Activated CD4-positive, alpha-beta T cell treated with anti-CD3 and anti-CD28 coated beads for 36 hours (primary cell): ENCODE measurements at regions of chr14 and their contacts with region 1.

Region 1: DNA sequence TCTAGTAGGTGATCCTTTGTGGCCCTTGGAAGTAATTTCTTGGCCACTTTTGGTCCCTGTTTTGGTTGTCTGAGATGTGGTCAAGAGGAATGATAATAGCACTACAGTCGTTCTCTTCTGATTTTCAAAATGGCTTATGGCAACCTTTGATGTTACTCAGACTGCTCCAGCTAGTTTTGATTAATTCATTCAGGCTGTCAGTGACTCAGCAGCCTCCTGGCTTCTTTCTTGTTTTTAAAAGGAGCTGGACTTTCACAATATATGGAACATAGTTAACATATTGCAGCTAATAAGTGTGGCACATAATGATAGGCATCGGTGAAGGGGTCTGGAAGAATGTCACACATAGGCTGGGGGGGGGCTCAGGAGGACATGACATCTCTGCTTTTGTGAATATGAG is 47.4 kb downstream of the WDR20 start:
- DNase-seq: no peak
- ATAC-seq: no peak
- H3K4me3 Mint-ChIP-seq: no peak overlapping the region
- H3K27ac Mint-ChIP-seq: peak overlapping the region; percentile 79
- H3K4me1 Mint-ChIP-seq: peaks cover 61% of the 10 kb centered on the region
- H3K27me3 Mint-ChIP-seq: no peaks in the 10 kb centered on the region

Region 2: DNA sequence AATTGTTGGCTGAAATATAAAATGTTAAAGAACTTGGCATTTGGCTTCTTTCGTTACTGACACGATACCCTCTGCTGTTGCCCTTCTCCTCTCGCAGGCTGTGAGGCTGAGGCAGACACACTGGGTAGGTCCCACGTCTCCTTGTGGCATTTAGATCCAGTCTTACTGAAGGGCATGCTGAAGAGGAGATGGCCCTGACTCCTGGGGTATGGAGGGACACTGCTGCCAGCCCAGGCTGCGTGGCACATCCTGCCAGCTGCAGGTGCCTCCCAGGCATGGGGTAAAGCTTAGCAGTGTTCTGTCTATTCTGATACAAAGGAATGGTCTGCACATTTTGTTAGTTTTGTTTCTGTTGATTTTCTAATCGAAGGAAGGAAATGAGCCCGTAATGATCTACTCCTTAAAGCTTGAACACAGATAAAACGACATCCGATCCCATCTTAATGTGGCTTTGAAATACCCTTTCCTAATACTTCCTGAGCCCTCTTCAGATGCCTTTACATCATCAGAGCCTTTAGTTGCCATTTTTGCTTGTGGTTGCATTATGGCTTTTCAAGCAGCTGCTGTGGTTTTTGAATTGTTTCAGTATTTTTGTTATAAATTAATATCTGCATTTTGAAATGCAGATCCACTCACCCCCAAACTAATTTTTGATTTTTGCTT is 13.8 kb after region 1 on chr14:
- CTCF ChIA-PET with region 1: interaction called, 3 read pairs
- POLR2A ChIA-PET with region 1: interaction called, 3 read pairs
- intact Hi-C with region 1: loop called (anchors 1 kb)
- DNase-seq: peak; percentile 24
- ATAC-seq: peak; percentile 46
- H3K4me3 Mint-ChIP-seq: peak overlapping the region; percentile 24
- H3K27ac Mint-ChIP-seq: peak overlapping the region; percentile 56
- H3K4me1 Mint-ChIP-seq: peaks cover 59% of the 10 kb centered on the region
- H3K27me3 Mint-ChIP-seq: no peaks in the 10 kb centered on the region

Region 3: GRCh38 chr14:102341566-102341965 is 154.5 kb after region 1 on chr14:
- CTCF ChIA-PET with region 1: no interaction called
- POLR2A ChIA-PET with region 1: no interaction called
- intact Hi-C with region 1: no loop called
- DNase-seq: no peak
- ATAC-seq: no peak
- H3K4me3 Mint-ChIP-seq: no peak overlapping the region
- H3K27ac Mint-ChIP-seq: no peak overlapping the region
- H3K4me1 Mint-ChIP-seq: no peaks in the 10 kb centered on the region
- H3K27me3 Mint-ChIP-seq: no peaks in the 10 kb centered on the region